ENCODE measurements at regions of chr15 and their contacts with region 1.

Region 1: DNA sequence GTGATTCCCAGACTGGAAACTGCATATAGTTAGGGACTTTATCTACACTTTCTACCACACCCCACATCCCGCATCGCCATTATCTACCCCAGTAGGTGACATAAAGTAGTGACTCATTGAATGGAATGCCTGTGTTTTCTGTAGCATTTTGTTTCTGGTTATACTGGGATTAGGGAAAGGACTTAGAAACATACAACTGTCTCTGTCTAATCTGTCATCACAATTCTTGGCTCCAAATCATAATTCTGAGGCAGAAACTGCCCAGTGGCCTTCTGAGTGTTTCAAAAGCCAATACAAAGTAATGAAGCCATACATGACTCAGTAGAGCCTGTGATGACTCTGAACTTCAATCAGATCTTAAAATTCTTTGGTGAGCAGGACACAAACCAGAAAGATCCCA is 115.7 kb upstream of the CHRM5 start:
- DNase-seq: peak; percentile 33 to 78
- H3K4me3 ChIP-seq: no peak overlapping the region
- H3K27ac ChIP-seq: peak overlapping the region; percentile 44
- H3K4me1 ChIP-seq: peaks cover 12% of the 10 kb centered on the region
- H3K27me3 ChIP-seq: no peaks in the 10 kb centered on the region
- CTCF ChIP-seq: no peak

Region 2: DNA sequence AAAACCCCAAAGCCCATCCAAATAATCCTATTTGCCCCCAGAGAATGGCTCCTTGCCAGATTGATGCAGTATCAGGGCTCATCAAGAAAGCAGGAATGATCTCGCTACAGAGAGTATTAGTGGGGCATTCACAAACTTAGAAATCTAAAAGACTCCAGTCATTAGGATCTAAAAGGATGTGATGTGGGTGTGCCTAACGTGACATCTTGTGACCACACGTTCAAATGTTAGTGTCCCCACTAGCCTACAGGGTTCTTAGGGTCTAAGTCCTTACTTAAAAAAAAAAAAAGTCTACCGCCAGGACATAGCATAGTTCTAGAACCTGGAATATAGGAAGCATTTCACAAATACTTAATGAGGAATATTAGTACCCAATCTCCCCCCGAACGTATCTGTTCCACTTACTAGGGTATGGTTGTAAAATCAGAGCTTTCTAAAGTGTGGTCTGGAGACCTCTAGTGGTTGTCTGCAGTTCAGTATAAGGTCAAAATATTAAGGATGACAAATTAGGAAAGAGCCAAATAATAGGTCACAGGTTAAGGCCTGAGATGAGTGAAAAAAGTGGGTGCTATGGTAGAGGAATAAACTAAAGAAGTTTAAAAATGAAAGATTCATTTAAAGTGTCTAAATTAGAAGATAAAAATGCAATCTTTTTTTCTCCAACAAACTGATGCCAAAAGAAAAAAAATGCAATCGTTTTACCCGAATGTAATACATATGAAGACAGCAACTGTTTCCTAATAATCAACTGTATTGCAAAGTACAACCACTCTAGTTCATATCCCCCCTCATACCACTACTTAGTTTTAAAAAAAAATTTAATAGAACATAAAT is 111.5 kb after region 1 on chr15:
- CTCF ChIA-PET with region 1: no interaction called
- POLR2A ChIA-PET with region 1: no interaction called
- intact Hi-C with region 1: loop called (anchors 10 kb)
- DNase-seq: no peak
- H3K4me3 ChIP-seq: no peak overlapping the region
- H3K27ac ChIP-seq: no peak overlapping the region
- H3K4me1 ChIP-seq: no peaks in the 10 kb centered on the region
- H3K27me3 ChIP-seq: no peaks in the 10 kb centered on the region
- CTCF ChIP-seq: peak; percentile 66

Region 3: DNA sequence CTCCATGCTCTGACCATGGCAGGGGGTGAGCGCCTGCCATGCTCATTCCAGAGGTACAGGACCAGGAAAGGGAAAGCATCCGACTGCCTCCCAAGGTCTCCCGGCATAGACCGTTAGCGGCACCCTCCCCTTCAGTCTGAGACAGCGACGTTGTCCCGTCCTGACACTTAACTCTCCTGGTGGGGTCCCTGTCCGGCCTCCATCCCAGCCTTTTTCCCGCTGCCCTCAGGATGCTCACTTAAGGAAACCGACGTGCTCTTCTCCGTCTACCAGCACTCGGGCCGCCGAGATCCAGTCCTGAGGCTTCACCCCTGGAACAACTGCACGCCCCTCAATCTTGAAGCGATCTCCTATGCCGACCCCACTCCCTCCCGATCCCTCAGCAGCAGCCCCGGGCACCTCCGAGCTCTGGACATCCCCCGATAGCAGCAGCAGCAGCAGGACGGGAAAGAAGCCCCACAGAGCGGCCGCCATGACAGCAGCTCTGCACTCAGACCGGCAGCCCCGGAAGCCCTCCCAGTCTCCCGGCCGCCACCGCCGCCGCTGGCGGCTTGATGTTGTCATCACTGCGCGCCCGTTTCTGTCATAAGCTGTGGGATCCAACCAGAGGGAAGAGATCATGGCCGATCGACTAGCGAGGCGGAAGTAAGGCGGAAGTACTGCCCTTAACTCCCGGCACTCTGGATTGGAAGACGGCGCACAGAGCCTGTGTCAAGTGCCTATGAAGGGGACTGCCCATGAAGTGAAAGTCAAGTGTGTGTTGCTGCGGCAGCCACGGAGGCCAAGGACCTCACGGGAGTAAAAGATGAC is 249.0 kb after region 1 on chr15 and contains the starts of genes EMC7 and PGBD4:
- CTCF ChIA-PET with region 1: no interaction called
- POLR2A ChIA-PET with region 1: no interaction called
- intact Hi-C with region 1: no loop called
- DNase-seq: peak; percentile 92 to 96
- H3K4me3 ChIP-seq: peak within 1 kb of the TSS; percentile 70
- H3K27ac ChIP-seq: peak within 1 kb of the TSS; percentile 65
- H3K4me1 ChIP-seq: peaks cover 19% of the 10 kb centered on the region
- H3K27me3 ChIP-seq: no peaks in the 10 kb centered on the region
- CTCF ChIP-seq: no peak
- total RNA-seq, gene EMC7: 33.9 and 34.3 TPM in 2 replicates
- total RNA-seq, gene PGBD4: 1.8 and 2.0 TPM in 2 replicates

Measured in PC-9 (cell line).